Mammary epithelial cell (primary cell): ENCODE measurements at regions of chr1 and their contacts with region 1.

Region 1: GRCh38 chr1:173342736-173343135 is 134.4 kb upstream of the PRDX6 start:
- DNase-seq: no peak
- H3K4me3 ChIP-seq: no peak overlapping the region
- H3K27ac ChIP-seq: no peak overlapping the region
- H3K4me1 ChIP-seq: no peaks in the 10 kb centered on the region
- H3K27me3 ChIP-seq: no peaks in the 10 kb centered on the region
- CTCF ChIP-seq: no peak

Region 2: DNA sequence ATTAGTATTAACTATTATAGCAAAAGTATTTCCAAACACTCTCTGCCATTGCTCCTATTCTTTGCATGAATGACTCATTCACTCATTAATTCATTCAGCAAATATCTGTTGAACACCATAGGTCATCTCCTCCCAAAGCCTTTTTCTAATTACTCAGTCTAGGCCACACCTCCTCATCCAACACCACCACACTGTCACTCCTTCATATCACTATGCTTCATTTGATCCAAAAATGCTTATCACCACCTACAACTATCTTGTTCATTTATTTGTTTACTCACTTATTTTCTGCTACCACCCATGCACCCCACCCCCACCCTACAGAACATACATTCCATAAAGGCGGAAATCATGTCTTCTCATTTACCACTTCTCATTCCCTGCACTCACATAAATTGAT is 41.2 kb before region 1 on chr1:
- CTCF ChIA-PET with region 1: no interaction called
- dilution Hi-C with region 1: no loop called
- in situ Hi-C with region 1: no loop called
- intact Hi-C with region 1: no loop called
- DNase-seq: peak; percentile 4
- H3K4me3 ChIP-seq: no peak overlapping the region
- H3K27ac ChIP-seq: no peak overlapping the region
- H3K4me1 ChIP-seq: peaks cover 3% of the 10 kb centered on the region
- H3K27me3 ChIP-seq: no peaks in the 10 kb centered on the region
- CTCF ChIP-seq: no peak

Region 3: DNA sequence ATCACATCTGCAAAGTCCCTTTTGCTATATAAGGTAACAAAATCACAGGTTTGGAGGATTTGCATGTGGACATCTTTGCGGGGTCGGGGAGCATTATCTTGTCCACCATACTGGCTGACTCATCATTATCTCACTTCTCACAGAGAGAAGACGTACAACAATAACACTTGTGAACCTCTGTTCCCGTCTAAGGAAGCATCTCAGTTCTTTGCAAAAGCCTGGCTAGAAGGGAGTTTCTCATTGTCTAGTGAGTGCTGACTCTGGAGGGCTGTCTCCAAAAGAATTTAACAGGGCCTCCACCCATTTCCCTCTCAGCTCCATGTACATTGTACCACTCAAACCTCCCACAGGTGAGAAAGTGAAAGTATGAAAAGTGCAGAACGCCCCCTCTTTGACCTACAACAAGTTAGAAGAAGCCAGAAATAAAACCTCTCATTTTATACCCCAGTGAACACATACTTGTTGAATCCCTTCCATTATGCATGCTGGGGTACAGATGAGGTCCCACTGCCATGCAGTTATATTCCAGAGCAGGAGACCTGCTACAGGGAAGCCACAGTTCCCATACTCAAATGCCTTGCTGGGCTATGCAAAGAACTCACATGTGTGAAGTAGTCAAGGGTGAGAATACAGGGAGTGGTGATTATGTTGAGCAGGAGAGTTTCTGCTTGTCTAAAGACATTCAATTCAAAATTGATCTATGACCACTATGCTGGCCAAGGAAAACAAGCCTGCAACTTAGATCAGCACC is 12.7 kb after region 1 on chr1:
- CTCF ChIA-PET with region 1: no interaction called
- dilution Hi-C with region 1: no loop called
- in situ Hi-C with region 1: no loop called
- intact Hi-C with region 1: no loop called
- DNase-seq: no peak
- H3K4me3 ChIP-seq: no peak overlapping the region
- H3K27ac ChIP-seq: no peak overlapping the region
- H3K4me1 ChIP-seq: peaks cover 13% of the 10 kb centered on the region
- H3K27me3 ChIP-seq: no peaks in the 10 kb centered on the region
- CTCF ChIP-seq: no peak

Region 4: DNA sequence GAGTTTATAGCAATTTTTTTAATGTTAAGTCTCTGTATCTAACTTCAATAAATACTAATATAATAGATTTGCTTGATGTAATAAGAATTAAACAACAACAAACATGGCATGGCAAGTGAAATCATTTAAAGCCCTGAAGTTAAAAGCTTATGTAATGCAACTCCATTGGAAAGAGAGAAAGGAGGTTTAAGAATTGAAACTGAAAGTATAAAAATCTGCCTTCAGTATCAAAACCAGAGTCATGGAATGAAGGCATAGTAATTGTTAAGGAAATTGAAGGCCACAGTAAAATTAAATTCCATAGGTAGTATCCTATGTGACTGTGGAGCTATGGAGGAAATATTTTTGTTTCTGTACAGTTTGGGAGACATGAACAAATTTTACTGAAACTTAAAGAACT is 189.5 kb after region 1 on chr1:
- CTCF ChIA-PET with region 1: no interaction called
- dilution Hi-C with region 1: no loop called
- in situ Hi-C with region 1: no loop called
- intact Hi-C with region 1: loop called (anchors 2 kb)
- DNase-seq: no peak
- H3K4me3 ChIP-seq: peak overlapping the region in 1 of 3 experiments; percentile 8
- H3K27ac ChIP-seq: no peak overlapping the region
- H3K4me1 ChIP-seq: peaks cover 5% of the 10 kb centered on the region
- H3K27me3 ChIP-seq: no peaks in the 10 kb centered on the region
- CTCF ChIP-seq: no peak